ENCODE measurements at regions of chr6 and their contacts with region 1.

Region 1: DNA sequence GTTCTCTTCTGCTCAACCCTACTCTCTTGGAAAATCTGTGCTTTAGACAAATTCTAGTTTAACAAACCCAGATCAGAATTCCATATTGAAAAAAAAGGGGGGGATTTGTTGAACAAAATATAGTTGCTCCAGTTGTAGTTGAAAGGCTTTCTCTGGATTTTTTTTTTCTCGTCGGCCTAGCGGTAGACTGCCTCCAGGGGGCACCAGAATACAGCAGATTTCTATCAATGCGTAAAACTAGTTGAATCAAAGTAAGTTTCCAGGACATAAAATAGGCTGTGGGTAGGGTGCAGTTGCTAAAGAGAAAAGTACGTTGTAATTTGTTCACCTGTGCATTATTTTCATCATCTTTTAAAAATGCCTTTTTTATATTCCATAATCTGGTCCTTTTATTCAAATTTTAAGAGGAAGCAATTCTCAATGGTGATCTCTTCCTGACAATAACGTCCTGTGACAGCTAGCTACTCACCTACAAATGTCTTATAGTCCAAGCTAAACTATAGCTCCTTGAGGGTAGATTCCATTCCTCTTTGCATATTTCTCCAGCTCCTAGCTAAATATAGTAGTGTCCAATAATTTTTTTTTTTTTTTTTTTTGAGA is 105.4 kb downstream of the PERP start:
- DNase-seq: peak in 7 of 10 donors; percentile 17 to 90 (median 60)

Region 2: DNA sequence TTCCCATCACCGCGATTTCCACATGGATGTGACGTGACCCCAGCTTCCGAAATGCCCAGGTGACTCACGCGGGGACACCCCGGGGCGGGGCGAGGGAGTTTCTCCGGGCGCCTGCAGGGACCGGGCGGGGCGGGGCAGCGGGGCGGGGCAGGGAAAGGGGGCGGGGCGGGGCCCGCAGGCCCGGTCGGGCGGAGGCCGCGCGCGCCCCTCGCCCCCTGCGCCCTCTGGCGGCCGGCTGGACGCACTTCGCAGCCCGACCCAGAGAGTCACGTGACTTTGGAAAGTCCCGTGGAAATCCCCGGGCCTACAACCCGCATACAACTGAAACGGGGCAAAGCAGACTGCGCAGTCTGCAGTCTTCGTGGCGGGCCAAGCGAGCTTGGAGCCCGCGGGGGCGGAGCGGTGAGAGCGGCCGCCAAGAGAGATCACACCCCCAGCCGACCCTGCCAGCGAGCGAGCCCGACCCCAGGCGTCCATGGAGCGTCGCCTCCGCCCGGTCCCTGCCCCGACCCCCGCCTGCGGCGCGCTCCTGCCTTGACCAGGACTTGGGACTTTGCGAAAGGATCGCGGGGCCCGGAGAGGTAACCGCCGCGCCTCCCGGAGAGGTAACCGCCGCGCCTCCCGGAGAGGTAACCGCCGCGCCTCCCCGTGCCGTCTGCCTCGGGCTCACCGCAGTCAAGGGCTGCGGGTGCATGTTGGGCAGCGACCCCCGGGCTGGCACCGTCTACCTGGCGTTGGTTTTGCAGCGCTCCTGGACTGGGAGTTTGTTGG is 134.8 kb before region 1 on chr6 and contains the start of gene TNFAIP3:
- intact Hi-C with region 1: no loop called
- DNase-seq: peak; percentile 61 to 96 (median 76)

Region 3: DNA sequence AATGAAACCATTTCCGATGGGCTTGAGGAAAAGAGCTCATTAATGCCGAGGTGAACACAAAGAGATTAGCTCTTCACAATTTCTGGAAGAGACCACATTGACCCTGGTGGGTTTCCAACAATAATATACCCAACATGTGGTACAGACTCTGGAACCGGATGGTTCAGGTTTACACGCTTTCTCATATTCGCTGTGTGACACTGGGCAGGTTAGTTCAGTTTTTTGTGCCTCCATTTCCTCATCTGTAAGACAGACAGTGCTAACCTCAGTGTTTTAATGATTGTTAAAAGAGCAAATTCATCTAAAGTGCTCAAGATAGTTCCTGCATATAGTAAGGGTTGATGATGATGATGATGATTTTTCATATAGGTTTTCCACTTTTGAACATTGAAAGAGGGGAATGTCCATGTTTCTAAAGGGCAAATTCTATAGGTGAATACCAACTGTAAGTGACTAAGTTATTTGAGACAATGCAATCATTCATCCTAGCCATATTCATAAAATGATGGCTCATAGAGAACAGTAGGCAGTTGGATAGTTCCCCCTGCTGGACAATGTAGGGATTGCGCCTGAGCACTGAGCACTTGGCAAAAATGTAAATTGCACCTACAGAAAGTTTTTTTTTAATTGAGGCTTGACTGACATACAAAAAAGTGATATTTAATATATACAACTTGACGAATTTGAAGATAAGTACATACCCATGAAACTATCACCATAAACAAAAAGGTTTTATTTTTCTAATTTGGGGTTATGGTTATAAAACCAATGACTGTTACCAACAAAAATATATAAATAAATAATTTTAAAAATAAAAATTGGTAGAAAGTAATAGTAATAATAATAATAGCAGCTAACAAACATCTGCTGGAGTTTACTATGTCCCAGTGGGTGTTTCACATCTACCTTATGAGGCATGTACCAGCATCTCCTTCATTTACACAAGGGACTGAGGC is 107.5 kb after region 1 on chr6:
- intact Hi-C with region 1: loop called (anchors 1 kb)
- DNase-seq: peak in 9 of 10 donors; percentile 34 to 90 (median 75)

Region 4: DNA sequence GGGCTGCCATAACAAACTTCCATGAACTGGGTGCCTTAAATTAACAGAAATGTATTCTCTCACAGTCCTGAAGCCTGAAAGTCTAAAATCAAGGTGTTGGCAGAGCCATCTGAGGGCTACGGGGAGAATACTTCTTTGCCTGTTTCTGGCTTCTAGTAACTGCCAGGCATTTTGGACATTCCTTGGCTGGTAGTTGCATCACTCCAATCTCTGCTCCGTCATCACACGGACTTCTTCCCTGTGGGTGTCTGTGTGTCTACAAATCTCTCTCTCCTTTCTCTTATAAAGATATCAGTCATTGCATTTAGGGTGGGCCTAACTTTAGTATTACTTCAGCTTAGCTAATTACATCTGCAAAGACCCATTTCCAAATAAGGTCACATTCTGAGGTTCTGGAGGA is 126.2 kb after region 1 on chr6:
- intact Hi-C with region 1: no loop called
- DNase-seq: no peak

Region 5: DNA sequence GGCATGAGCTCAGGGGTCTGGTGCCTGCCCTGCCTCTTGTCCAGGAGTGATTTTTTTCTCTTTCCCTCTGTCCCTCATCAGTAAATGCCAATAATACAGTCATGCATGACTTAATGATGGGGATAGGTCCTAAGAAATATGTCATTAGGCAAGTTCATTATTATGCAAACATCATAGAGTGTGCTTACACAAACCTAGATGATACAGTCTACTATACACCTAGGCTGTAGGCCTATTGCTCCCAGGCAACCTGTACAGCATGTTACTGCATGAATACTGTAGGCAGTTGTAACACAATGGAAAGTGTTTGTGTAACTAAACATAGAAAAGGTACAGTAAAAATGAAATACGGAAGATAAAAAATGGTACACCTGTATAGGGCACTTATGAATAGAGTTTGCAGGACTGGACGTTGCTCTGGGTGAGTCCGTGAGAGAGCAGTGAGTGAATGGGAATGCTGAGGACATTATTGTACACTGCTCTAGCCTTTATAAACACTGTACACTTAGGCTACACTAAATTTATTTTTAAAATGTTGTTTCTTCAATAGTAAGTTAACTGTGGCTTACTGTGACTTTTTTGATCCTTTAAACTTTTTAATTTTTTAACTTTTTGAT is 194.4 kb after region 1 on chr6:
- intact Hi-C with region 1: loop called (anchors 5 kb)
- DNase-seq: no peak

Region 6: DNA sequence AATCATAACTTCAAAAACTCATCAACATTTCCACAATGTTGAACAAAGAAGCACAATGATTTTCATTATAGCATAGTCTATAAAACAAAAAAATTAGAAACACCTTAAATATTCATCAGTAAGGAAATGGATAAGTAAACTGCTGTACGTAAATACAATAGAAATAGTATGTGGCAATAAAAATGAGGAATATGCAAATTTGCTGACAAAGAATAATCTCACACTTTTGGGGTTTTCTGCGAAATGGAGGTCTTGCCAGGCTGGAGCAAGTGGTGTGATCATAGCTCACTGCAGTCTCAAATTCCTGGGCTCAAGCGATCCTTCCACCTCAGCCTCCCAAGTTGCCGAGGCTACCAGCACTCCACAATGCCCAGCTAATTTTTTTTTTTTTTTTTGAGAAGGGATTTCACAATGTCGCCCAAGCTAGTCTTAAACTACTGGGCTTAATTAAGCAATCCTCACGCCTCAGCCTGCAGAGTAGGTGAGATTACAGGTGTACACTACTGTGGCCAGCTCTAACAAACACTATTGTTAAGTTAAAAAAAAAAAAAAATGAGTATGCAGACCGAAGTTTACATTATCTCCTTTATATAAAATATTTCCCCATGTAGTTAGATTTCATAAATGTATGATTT is 317.0 kb after region 1 on chr6:
- intact Hi-C with region 1: no loop called
- DNase-seq: no peak

Region 7: DNA sequence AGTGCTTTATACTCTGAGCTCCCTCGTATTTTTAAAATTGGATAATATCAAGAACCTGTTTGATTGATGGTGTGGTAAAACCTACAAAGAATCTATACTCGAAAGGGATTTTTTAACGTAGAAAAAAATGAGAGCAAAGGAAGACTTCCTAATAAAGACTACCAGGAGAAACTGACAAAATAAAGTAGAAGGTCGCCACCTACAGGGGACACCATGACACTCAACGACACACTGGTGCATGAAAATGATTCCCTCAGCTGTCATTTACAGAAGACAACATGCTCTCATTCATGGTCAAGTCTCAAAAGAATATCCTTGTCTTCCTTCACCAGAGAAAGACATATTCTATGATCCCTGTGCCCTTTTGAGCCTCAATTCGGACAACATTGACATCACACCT is 507.5 kb after region 1 on chr6:
- intact Hi-C with region 1: loop called (anchors 10 kb)
- DNase-seq: peak in 5 of 10 donors; percentile 37 to 89 (median 48)

Measured in posterior cingulate gyrus (tissue), 11 donors.